ENCODE measurements at regions of chr14 and their contacts with region 1.

Region 1: DNA sequence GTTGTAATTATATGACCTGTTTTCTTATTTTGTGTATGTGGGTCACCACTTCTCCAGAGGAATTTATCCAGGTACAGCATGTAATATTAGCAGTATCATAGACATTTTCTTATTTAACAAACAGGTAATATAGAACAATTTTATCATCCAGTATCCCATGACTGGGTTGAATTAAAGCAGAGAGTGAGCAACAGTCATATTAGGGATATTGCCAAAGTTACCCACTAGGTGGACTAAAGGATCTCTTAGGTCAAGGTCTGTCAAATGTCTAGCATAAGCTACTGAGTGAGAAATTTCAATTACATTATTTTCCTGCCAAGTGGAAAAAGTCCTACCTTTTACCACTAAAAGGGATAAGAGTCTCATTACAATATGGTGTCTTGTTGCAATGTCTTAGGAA is 62.1 kb upstream of the TRIM9 start:
- DNase-seq: peak; percentile 27
- H3K4me3 ChIP-seq: no peak overlapping the region
- H3K27ac ChIP-seq: no peak overlapping the region
- H3K4me1 ChIP-seq: no peaks in the 10 kb centered on the region
- H3K27me3 ChIP-seq: no peaks in the 10 kb centered on the region
- CTCF ChIP-seq: peak; percentile 37 to 55

Region 2: DNA sequence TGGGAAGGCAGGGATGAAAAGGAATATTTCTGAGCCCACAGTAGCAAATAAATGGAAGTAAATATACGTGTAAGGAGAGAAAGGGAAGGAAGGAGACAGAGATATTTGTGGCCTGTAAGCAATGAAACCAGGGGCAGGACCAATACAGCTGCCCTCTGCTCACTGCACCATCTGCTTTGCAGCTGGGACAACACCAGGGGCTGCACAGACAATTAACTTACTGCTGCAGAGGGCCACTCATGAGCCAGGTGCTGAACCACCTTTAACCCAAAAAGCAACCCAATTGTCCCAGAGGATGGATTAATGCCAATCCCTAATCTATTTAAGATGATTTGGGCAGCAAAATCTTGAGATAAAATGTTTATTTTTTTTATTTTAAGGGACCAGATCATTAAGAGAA is 52.4 kb after region 1 on chr14:
- CTCF ChIA-PET with region 1: no interaction called
- dilution Hi-C with region 1: no loop called
- in situ Hi-C with region 1: no loop called
- intact Hi-C with region 1: no loop called
- DNase-seq: no peak
- H3K4me3 ChIP-seq: no peak overlapping the region
- H3K27ac ChIP-seq: no peak overlapping the region
- H3K4me1 ChIP-seq: no peaks in the 10 kb centered on the region
- H3K27me3 ChIP-seq: peaks cover 2% of the 10 kb centered on the region
- CTCF ChIP-seq: no peak

Region 3: DNA sequence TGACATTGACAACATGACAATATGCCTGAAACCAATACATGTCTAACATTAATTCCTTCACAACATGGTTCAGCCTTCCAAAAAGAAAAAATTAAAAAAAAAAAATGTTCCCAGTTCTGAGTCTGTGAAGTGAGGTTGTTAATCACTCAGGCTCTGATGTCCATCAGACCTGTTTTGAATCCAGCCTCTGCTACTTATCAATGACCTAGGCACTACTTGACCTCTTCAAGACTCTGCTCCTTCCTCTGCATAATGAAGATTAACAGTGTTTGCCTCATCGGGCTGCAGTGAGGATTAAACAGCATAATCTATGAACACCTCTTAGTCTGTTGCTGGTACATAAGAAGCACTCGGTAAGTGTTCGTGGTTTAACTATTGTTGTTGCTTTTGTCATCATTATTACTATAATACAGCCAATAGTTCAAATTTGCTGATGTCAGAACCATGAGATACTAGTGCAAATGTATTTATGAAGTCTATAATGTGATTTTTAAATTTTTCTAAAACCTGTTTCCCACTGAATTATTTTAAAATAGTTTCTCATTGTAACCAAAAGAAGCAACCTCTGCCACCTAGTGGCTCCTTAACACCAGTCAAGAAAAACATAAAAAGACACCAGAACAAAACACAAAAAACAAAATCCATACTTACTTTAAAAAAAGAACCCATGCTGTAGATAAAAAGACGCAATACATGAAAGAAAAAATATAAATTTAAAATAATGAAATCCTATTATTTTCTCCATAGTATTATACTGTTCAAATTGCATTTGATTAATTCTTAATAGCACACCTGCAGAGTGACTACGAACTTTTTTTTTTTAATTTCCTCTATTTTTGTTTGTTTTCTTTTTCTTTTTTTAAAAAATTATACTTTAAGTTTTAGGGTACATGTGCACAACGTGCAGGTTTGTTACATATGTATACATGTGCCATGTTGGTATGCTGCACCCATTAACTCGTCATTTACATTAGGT is 62.7 kb after region 1 on chr14:
- CTCF ChIA-PET with region 1: no interaction called
- dilution Hi-C with region 1: no loop called
- in situ Hi-C with region 1: no loop called
- intact Hi-C with region 1: loop called (anchors 2 kb)
- DNase-seq: no peak
- H3K4me3 ChIP-seq: no peak overlapping the region
- H3K27ac ChIP-seq: no peak overlapping the region
- H3K4me1 ChIP-seq: no peaks in the 10 kb centered on the region
- H3K27me3 ChIP-seq: no peaks in the 10 kb centered on the region
- CTCF ChIP-seq: peak; percentile 53 to 65

Region 4: GRCh38 chr14:51979088-51979709 is 822.2 kb after region 1 on chr14:
- CTCF ChIA-PET with region 1: no interaction called
- dilution Hi-C with region 1: no loop called
- in situ Hi-C with region 1: no loop called
- intact Hi-C with region 1: loop called (anchors 5 kb)
- DNase-seq: peak; percentile 54
- H3K4me3 ChIP-seq: no peak overlapping the region
- H3K27ac ChIP-seq: no peak overlapping the region
- H3K4me1 ChIP-seq: no peaks in the 10 kb centered on the region
- H3K27me3 ChIP-seq: no peaks in the 10 kb centered on the region
- CTCF ChIP-seq: peak; percentile 88 to 92

Measured in mammary epithelial cell (primary cell).